Activated naive CD4-positive, alpha-beta T cell treated with anti-CD3 and anti-CD28 coated beads for 36 hours (primary cell): ENCODE measurements at regions of chr6 and their contacts with region 1.

Region 1: GRCh38 chr6:87701676-87702588 is at the start of gene AKIRIN2:
- DNase-seq: peak; percentile 97
- H3K4me3 Mint-ChIP-seq: peak within 1 kb of the TSS; percentile 86
- H3K27ac Mint-ChIP-seq: peak within 1 kb of the TSS; percentile 89
- H3K4me1 Mint-ChIP-seq: peaks cover 42% of the 10 kb centered on the region
- H3K27me3 Mint-ChIP-seq: no peaks in the 10 kb centered on the region
- total RNA-seq, gene AKIRIN2: 47.6 to 49.8 TPM

Region 2: GRCh38 chr6:87407901-87408720 is 293.8 kb before region 1 on chr6 and contains the start of gene CFAP206:
- CTCF ChIA-PET with region 1: no interaction called
- intact Hi-C with region 1: loop called (anchors 1 kb)
- DNase-seq: peak; percentile 81
- H3K4me3 Mint-ChIP-seq: peak within 1 kb of the TSS; percentile 84
- H3K27ac Mint-ChIP-seq: no peak within 1 kb of the TSS
- H3K4me1 Mint-ChIP-seq: no peaks in the 10 kb centered on the region
- H3K27me3 Mint-ChIP-seq: peaks cover 11% of the 10 kb centered on the region
- total RNA-seq, gene CFAP206: not detected

Region 3: GRCh38 chr6:87589693-87590549 is 112.0 kb before region 1 on chr6 and contains the starts of genes ORC3 and RARS2:
- CTCF ChIA-PET with region 1: no interaction called
- intact Hi-C with region 1: loop called (anchors 1 kb)
- DNase-seq: peak; percentile 97
- H3K4me3 Mint-ChIP-seq: peak within 1 kb of the TSS; percentile 90
- H3K27ac Mint-ChIP-seq: peak within 1 kb of the TSS; percentile 83
- H3K4me1 Mint-ChIP-seq: peaks cover 60% of the 10 kb centered on the region
- H3K27me3 Mint-ChIP-seq: no peaks in the 10 kb centered on the region
- total RNA-seq, gene ORC3: 33.8 to 36.1 TPM
- total RNA-seq, gene RARS2: 15.9 to 17.4 TPM

Region 4: DNA sequence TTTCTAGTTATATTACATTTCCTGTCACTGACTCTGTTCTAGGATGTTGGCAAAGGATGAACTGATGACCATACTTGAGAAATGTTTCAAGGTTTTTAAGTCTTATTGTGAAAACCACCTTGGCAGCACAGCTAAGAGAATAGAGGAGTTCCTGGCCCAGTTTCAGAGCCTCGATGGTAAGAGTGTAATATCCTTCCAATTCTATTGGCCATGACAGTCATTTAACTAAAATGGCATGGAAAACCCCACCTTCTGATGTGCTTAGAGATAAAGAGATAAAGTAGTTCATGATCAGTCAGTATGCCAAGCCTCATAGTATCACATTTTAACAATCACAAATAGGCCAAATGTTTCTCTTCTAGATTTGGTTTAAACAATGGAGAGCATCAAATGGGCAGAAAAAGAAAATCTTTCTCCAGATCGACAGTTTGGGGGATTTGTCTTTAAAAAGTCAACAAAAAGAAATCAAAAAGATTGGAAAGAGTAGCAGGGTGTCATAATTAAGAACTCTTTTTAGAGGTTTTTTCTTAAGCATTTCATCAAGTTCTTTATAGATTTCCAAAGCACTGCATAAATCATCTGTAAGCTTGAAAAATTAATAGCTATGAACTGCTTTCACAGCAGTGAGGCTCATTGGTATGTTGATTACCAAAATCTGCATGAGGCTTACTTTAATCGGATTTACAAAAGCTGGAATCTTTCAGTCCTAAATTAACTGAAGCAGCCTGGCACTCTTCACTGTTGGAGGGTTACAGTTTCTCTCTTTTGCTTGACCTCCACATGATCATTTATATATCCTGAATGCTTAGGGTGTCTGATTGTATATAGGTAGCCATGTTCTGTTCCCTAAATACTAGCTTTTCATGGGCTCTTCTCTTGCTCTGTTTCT is 48.6 kb before region 1 on chr6:
- CTCF ChIA-PET with region 1: no interaction called
- intact Hi-C with region 1: loop called (anchors 1 kb)
- DNase-seq: peak; percentile 30
- H3K4me3 Mint-ChIP-seq: no peak overlapping the region
- H3K27ac Mint-ChIP-seq: peak overlapping the region; percentile 69
- H3K4me1 Mint-ChIP-seq: peaks cover 20% of the 10 kb centered on the region
- H3K27me3 Mint-ChIP-seq: no peaks in the 10 kb centered on the region

Region 5: DNA sequence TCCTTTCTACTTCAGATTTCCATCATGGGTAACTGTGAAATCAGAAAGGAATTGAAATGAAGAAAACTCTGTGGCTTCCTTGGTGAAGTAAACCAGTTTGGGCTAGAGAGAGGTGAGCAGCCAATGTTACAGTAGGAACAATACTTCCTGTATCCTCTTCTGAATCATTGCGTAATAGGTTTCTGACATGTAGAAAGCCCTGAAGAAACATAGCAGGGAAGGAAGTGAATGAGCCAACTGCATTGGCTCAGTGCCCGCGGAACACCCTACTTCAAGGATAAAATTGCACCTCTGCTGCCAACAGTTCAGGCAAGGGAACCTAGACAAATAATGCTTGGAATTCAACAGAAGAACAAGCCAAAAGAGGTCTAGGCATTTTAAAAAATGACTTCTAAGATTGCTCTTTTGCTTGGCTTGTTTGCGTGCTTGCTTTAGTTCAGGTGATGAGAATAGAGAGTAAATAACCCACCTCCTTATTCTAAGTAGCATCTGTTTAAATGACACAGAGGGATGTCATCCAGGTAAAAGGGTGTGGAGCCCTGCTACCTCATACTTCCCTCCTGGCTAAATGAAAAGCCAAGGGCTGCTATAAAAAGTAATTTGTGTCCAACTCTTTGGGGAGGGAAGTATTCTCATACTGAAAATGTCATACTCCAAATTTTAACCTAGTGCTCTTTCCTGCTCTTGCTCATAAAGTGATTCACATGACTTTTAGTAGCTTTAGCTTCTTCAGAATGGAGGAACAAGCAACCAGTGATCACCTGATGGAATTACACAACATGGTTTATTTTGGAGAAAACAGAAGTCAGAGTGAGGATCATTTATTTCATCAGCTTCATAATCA is 30.1 kb after region 1 on chr6:
- CTCF ChIA-PET with region 1: interaction called, 5 read pairs
- intact Hi-C with region 1: loop called (anchors 1 kb)
- DNase-seq: peak; percentile 70
- H3K4me3 Mint-ChIP-seq: no peak overlapping the region
- H3K27ac Mint-ChIP-seq: peak overlapping the region; percentile 15
- H3K4me1 Mint-ChIP-seq: peaks cover 26% of the 10 kb centered on the region
- H3K27me3 Mint-ChIP-seq: no peaks in the 10 kb centered on the region

Region 6: DNA sequence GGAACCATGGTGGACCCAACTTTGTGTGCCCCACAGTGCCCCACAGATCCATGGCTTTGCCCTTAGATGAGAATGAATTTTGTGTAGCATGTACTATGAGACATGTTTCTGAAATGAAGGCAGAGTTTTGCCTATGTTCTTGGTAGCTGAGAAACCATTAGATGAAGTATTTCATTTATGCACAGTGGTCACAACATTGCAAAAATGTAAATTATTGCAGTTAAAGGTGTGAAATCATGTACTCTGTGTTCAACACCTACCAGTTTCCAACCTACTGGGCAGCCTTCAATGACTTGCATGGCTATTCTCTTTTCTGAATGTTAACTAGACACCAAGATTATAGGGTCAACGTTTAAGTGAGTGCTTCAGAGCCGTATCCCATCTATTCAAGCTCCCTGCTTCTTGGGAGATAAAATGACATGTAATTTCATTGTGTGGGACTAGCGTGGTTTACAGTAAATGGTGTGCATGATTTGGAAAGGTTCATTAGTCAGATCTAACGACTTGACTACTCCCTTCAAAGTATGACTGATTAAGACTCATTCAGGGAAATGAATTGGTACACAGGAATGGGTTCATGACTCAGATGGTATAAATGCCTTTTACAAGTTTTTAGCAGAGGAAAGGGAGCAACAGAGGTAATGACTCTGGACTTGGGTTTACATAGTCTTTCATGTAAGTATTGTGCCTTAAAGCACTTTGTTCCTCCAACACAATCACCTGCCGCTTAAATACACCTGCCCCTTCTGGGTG is 106.2 kb after region 1 on chr6:
- CTCF ChIA-PET with region 1: interaction called, 4 read pairs
- intact Hi-C with region 1: loop called (anchors 1 kb)
- DNase-seq: peak; percentile 16
- H3K4me3 Mint-ChIP-seq: no peak overlapping the region
- H3K27ac Mint-ChIP-seq: peak overlapping the region; percentile 50
- H3K4me1 Mint-ChIP-seq: peaks cover 16% of the 10 kb centered on the region
- H3K27me3 Mint-ChIP-seq: peaks cover 20% of the 10 kb centered on the region

Region 7: GRCh38 chr6:88492824-88493223 is 790.9 kb after region 1 on chr6:
- CTCF ChIA-PET with region 1: no interaction called
- intact Hi-C with region 1: no loop called
- DNase-seq: no peak
- H3K4me3 Mint-ChIP-seq: no peak overlapping the region
- H3K27ac Mint-ChIP-seq: no peak overlapping the region
- H3K4me1 Mint-ChIP-seq: no peaks in the 10 kb centered on the region
- H3K27me3 Mint-ChIP-seq: peaks cover 13% of the 10 kb centered on the region